Activated CD8-positive, alpha-beta T cell treated with anti-CD3 and anti-CD28 coated beads for 36 hours (primary cell): ENCODE measurements at regions of chr1 and their contacts with region 1.

Region 1: DNA sequence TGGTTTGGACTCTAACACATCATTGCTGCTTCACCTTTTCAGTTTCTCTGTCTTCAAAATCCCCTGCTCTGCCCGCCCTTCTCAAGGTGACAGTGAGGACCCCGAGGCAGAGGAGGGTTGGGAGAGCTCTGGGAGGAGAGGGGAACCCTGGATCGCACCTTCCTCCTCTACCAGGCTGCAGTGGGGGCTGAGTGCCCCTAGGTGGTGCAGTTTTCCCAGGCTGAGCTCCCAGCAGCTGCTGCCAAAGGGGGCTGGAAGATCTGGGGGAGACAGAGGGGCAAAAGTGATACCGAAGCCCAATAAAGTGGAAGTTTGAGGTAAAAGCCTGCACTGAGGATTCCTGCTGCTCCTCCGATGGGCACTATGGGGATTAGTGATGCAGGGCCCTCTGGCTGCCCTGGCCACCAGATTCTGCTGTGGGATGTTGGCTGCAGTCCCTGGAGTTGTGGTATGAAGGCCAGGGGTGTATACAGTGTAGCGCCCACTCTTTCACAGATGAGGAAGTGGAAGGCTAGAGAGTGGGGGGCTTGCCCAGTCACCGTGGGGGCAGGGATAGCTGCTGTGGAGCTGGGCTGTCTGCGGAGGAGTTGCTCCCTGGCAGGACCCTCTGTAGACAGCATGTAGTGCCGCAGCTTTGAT is 40.7 kb upstream of the SCMH1 start:
- DNase-seq: peak; percentile 56
- ATAC-seq: peak; percentile 82
- H3K4me3 Mint-ChIP-seq: no peak overlapping the region
- H3K27ac Mint-ChIP-seq: no peak overlapping the region
- H3K4me1 Mint-ChIP-seq: peaks cover 5% of the 10 kb centered on the region
- H3K27me3 Mint-ChIP-seq: peaks cover 33% of the 10 kb centered on the region
- CTCF ChIP-seq: peak; percentile 90

Region 2: DNA sequence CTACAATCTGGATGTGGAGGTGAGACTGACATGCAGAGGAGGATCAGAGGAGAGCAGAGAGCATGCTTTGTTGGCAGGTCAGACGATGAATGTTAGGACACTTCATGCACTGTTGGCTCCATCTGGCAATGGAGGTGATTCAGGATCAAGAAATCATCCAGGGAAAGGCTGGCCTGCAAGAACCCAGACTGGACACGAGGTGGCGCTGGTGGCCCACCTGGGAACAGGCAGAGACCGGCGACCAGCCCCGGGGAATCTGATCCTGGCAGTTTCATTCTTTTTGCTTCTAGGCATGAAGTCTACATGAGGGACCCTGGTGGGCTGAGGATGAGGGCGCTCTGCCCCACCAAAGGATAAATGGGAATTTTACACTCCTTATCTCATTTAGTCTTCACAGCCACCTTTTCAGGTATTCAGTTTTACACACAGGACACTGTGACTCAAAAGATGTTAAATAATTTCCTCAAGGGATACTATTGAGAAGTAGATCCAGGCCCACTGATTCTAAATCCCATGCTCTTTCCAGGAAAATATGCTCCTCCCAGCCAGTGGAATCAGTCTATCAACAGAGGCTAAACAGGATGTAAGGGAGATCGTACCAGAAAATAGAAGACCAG is 14.5 kb before region 1 on chr1:
- CTCF ChIA-PET with region 1: interaction called, 15 read pairs
- POLR2A ChIA-PET with region 1: no interaction called
- intact Hi-C with region 1: no loop called
- DNase-seq: peak; percentile 68
- ATAC-seq: peak; percentile 74
- H3K4me3 Mint-ChIP-seq: no peak overlapping the region
- H3K27ac Mint-ChIP-seq: no peak overlapping the region
- H3K4me1 Mint-ChIP-seq: no peaks in the 10 kb centered on the region
- H3K27me3 Mint-ChIP-seq: no peaks in the 10 kb centered on the region
- CTCF ChIP-seq: peak; percentile 99

Region 3: DNA sequence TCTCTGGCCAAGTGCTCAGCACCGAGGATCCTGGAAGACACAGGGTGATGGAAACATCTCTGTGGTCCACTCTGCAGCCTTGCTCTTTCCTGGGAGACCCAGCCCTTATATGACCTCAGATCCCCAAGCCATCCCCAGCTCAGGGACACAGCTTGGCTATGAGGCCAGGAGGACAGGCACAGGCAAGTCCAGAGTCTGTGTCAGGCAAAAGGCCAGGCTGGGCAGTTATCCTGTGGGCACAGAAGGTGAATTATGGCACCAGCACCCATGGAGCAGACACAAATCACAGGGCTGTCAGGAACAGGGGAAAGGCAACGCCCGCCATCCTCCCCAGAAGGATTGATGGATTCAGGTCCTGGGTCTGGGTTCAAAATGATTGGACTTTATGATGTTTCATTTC is 11.4 kb after region 1 on chr1:
- CTCF ChIA-PET with region 1: interaction called, 17 read pairs
- POLR2A ChIA-PET with region 1: no interaction called
- intact Hi-C with region 1: no loop called
- DNase-seq: no peak
- ATAC-seq: no peak
- H3K4me3 Mint-ChIP-seq: no peak overlapping the region
- H3K27ac Mint-ChIP-seq: no peak overlapping the region
- H3K4me1 Mint-ChIP-seq: no peaks in the 10 kb centered on the region
- H3K27me3 Mint-ChIP-seq: peaks cover 20% of the 10 kb centered on the region
- CTCF ChIP-seq: no peak

Region 4: GRCh38 chr1:41313661-41314131 is 30.9 kb after region 1 on chr1:
- CTCF ChIA-PET with region 1: interaction called, 19 read pairs
- POLR2A ChIA-PET with region 1: no interaction called
- intact Hi-C with region 1: no loop called
- DNase-seq: peak; percentile 45
- ATAC-seq: peak; percentile 55
- H3K4me3 Mint-ChIP-seq: no peak overlapping the region
- H3K27ac Mint-ChIP-seq: no peak overlapping the region
- H3K4me1 Mint-ChIP-seq: peaks cover 2% of the 10 kb centered on the region
- H3K27me3 Mint-ChIP-seq: no peaks in the 10 kb centered on the region
- CTCF ChIP-seq: peak; percentile 85

Region 5: DNA sequence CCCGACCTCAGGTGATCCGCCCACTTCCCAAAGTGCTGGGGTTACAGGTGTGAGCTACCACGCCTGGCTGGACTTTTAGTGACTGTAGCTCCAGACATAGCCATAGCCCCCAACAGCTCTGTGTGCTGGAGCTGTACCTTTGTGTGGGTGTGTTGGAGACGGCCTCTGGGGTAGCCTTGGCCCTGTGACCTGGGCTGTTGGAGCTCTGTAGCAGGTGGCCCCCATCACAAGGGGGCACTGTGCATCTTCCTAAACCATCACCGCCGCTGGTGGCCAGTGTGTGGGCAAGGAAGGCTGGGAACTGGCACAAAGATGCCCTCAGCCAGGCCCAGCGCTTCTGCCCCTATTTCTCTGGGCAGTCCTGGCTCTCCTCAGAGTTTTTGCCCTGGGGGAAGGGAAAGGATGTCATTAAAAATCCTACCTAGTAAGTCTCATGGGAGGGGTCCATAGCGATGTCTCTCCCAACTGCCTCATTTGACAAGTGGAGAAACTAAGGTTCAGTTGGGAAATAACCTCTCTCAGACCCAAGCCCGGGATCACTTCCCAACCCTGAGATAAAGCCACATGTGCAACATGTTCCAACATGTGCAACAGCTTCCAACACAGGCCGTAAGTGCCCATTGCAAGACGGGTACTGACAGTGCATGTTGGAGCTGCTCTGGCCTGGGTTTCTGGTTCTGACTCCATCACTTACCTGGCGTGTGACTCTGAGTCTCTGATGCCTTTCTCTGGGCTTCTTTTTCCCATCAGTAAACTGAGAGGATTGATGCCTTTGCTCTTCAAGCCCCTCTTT is 40.2 kb after region 1 on chr1:
- CTCF ChIA-PET with region 1: interaction called, 12 read pairs
- POLR2A ChIA-PET with region 1: no interaction called
- intact Hi-C with region 1: no loop called
- DNase-seq: peak; percentile 60
- ATAC-seq: peak; percentile 81
- H3K4me3 Mint-ChIP-seq: no peak overlapping the region
- H3K27ac Mint-ChIP-seq: no peak overlapping the region
- H3K4me1 Mint-ChIP-seq: no peaks in the 10 kb centered on the region
- H3K27me3 Mint-ChIP-seq: no peaks in the 10 kb centered on the region
- CTCF ChIP-seq: peak; percentile 48

Region 6: DNA sequence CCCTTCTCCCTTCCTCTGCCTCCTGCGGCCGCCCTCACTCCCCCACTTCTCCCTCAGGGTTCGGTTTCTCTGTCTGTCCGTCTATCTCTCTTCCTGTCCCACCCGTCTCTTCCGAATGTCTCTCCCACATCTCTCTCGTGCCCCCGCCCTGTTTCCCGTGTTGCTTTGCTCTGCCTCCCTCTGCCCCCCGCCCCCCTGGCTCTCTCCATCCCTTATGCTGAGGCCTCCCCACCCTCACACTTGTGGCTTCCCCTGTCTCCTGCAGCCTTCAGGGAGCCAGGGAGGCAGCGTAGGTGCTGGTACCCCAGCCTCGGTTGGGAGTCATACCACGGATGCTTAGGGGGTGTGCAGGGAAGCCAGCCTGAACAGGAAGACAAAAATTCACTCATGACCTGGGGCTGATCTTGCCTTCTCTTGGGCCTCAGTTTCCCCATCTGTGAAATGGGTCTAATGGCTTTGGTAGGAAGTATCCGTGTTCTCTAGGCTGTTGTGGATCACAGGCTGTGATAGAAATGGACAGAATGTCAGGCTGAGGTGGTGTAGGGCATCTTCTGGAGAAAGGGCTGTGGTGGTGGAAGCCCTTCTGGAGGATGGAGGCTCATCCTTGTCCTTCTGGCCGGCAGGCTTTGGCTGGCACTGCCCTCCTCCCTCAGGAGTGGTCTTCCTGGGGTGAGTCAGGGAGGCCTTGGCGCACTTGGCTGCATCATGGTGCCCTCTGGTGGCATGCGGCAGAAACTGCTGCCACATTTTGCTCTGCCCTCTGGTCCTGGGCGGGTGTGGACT is 133.9 kb after region 1 on chr1:
- CTCF ChIA-PET with region 1: interaction called, 65 read pairs
- POLR2A ChIA-PET with region 1: no interaction called
- intact Hi-C with region 1: loop called (anchors 5 kb)
- DNase-seq: peak; percentile 65
- ATAC-seq: peak; percentile 79
- H3K4me3 Mint-ChIP-seq: no peak overlapping the region
- H3K27ac Mint-ChIP-seq: no peak overlapping the region
- H3K4me1 Mint-ChIP-seq: no peaks in the 10 kb centered on the region
- H3K27me3 Mint-ChIP-seq: peaks cover 9% of the 10 kb centered on the region
- CTCF ChIP-seq: peak; percentile 94

Region 7: DNA sequence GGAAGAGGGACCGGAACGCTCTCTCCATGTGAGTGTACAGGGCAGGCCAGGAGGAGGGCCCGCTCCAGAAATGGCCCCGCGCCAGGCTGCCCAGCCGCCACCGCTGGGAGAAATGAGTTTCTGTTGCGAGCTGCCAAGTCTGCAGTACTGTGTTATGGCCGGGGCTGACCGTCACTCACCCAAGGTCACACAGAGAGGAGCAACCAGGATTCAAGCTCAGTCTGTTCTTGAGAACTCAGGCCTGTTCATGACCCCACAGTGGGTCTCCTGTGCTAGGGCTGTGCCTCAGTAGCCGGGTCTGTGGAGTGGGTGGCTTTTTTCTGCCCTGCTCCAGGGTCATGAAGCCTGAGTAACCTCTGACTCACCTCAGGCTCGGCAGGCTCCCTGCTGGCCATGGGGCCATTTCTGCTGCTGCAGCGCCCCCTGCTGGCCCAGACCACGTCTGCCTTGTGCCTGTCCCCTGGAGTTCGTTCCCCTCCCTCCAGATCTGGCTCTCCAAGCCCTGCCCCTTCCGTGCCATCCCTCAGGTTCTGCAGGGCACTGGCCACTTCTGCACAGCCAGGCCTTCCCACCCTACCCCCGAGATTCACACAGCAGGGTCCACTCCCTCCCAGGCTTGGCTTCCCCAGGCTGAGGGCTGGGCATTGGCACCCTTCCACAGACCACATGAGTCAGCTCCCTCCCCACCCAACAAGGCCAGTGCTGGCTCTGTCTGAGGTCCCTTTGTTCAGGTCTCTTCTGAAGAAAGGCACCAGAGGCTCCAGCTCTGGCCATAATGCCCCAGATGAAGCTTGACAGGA is 149.9 kb after region 1 on chr1:
- CTCF ChIA-PET with region 1: interaction called, 30 read pairs
- POLR2A ChIA-PET with region 1: no interaction called
- intact Hi-C with region 1: no loop called
- DNase-seq: peak; percentile 91
- ATAC-seq: peak; percentile 98
- H3K4me3 Mint-ChIP-seq: no peak overlapping the region
- H3K27ac Mint-ChIP-seq: no peak overlapping the region
- H3K4me1 Mint-ChIP-seq: no peaks in the 10 kb centered on the region
- H3K27me3 Mint-ChIP-seq: peaks cover 18% of the 10 kb centered on the region
- CTCF ChIP-seq: peak; percentile 90